Spleen (tissue), 13 donors: ENCODE measurements at regions of chr18 and their contacts with region 1.

Region 1: DNA sequence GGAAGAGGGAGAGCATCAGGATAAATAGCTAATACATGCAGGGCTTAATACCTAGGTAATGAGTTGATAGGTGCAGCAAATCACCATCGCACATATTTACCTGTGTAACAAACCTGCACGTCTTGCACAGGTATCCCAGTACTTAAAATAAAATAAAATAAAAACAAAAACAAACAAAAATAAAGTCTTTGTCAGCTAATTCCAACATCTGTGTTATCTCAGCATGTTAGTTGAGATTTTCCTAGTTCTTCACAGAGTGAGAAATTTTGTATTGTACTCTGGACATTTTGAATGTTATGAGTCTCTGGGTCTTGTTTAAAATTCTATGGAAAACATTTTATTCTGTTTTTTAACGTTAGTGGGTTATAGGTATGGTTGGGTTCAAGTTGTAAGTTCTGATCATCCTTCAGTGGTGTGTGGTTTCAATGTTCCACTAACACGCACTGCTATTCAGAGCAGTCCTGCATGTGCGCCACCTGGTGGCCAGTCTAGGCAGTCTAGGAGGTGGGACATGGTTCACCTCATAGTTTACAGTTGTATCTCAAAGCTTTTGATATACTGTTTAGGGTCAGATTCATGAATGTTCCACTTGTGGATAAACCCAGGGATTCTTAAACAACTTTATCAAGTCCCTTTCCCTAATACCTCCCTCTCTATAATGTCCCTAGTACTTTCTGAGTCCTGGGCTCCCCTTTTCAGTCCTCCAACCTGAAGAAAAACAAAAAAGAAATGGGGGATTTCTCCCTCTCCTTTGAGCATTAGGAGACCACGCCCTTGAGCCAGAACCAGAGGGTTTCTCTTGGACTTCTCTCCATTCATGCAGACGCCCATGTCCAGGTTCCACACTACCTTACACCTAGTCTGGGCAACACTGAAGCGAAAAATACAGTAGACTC is 213.4 kb upstream of the GATA6 start:
- DNase-seq: peak; percentile 95
- H3K4me3 ChIP-seq: no peak overlapping the region
- H3K27ac ChIP-seq: no peak overlapping the region
- H3K4me1 ChIP-seq: peaks cover 0 to 7% (median 0%) of the 10 kb centered on the region in 6 donors
- H3K27me3 ChIP-seq: peaks cover 0 to 6% (median 0%) of the 10 kb centered on the region in 7 donors
- CTCF ChIP-seq: peak; percentile 58 to 93 (median 89)
- POLR2A ChIP-seq: no peak

Region 2: DNA sequence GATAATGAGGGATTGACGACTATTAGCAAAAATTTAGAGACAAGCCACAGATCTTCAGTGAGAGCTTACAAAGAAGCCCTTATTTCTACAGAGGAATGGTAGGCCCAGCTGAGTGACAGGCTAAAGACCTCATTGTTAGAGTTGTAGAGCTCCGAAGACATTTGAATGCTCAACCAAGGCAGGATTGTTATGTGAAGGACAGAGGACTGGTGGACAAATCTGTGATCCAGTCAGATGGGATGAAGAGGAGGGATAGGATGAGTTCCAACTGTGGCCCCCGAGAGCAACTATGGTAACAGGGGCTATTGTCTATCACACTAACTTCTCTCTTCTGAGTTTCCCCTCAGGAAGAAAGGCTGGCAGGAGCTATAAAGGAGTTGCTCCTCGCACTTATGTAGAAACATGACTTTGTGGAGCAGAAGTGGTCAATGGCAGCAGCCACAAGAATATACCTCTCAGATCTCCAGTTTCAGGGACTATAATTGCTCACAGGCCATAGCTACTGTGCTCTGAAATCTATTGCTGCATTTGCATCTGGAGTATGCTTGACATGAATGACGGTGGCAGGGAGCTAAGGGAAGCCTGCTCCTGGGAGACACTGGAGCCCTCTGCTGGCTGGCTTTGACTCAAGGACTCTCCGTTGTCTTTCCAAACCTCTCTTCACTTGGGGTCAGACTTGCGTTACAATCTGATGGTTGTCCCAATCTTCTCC is 764.3 kb before region 1 on chr18:
- intact Hi-C with region 1: loop called (anchors 5 kb)
- DNase-seq: no peak
- H3K4me3 ChIP-seq: no peak overlapping the region
- H3K27ac ChIP-seq: no peak overlapping the region
- H3K4me1 ChIP-seq: peaks cover 0 to 3% (median 0%) of the 10 kb centered on the region in 6 donors
- H3K27me3 ChIP-seq: peaks cover 0 to 11% (median 0%) of the 10 kb centered on the region in 7 donors
- CTCF ChIP-seq: peak in 4 of 11 experiments; percentile 10 to 31 (median 18)
- POLR2A ChIP-seq: no peak

Region 3: DNA sequence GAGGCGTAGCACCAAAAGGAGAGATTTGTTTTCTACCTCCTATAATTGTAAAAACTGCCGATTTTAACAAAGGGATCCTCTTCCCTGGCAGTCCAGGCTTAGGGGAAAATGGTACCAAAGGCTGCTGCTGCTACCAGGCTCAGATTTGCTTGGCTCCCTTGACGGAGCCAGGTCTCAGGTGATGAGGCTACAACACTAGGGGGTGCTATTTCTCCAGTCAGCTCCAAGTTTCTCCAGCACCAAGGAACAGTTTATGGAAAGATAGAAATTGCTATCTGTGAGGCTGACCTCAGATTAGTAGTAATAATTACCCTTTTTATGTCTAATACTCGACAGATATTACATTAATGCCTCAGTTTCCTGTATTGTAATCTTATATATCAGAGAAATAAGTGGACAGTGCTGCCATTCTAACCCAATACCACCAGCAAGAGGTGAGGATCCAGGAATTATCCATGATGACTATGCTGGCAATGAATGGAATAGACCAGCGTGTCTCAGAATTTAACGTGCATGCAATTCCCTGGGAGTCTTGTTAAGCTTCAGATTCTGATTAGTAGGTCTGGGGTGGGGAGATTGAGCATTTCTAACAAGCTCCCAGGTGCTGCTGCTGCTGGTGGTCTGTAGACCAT is 466.8 kb before region 1 on chr18:
- intact Hi-C with region 1: loop called (anchors 5 kb)
- DNase-seq: no peak
- H3K4me3 ChIP-seq: no peak overlapping the region
- H3K27ac ChIP-seq: no peak overlapping the region
- H3K4me1 ChIP-seq: no peaks in the 10 kb centered on the region
- H3K27me3 ChIP-seq: peaks cover 0 to 5% (median 0%) of the 10 kb centered on the region in 7 donors
- CTCF ChIP-seq: peak in 10 of 11 experiments; percentile 15 to 73 (median 58)
- POLR2A ChIP-seq: no peak